ENCODE measurements at regions of chrX and their contacts with region 1.

Region 1: GRCh38 chrX:119745283-119745848 is 13.0 kb upstream of the SOWAHD start:
- DNase-seq: no peak
- H3K4me3 ChIP-seq: no peak overlapping the region
- H3K27ac ChIP-seq: no peak overlapping the region
- H3K4me1 ChIP-seq: no peaks in the 10 kb centered on the region
- H3K27me3 ChIP-seq: peaks cover 0 to 3% (median 0%) of the 10 kb centered on the region in 5 experiments

Region 2: DNA sequence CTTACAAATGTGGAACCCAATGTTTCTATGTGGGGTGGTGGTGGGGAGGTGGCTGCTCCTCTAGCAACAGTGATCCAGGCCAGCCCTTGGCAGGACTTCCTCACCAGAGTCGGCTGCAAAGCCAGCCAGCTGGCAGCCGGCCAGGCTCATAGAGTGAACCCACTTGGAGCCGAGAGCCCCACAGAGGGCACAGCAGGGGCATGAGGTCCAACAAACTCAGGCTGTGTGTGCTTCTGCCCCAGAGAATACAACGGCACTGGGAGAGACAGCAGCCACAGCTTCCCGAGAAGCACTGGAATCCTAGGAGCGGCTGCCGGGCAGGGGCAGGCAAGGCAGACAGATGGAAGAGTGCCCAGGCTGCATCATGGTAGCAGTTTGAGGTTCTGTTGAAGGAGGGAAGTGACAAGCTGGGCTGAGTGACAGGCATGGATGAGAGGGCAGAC is 10.4 kb before region 1 on chrX:
- CTCF ChIA-PET with region 1: interaction called, 12 read pairs
- POLR2A ChIA-PET with region 1: no interaction called
- DNase-seq: peak; percentile 32 to 77 (median 74)
- H3K4me3 ChIP-seq: peak overlapping the region in 1 of 7 experiments; percentile 33
- H3K27ac ChIP-seq: no peak overlapping the region
- H3K4me1 ChIP-seq: peaks cover 0 to 10% (median 3%) of the 10 kb centered on the region in 4 experiments
- H3K27me3 ChIP-seq: no peaks in the 10 kb centered on the region